Tibial artery (tissue), 4 donors: ENCODE measurements at regions of chr20 and their contacts with region 1.

Region 1: DNA sequence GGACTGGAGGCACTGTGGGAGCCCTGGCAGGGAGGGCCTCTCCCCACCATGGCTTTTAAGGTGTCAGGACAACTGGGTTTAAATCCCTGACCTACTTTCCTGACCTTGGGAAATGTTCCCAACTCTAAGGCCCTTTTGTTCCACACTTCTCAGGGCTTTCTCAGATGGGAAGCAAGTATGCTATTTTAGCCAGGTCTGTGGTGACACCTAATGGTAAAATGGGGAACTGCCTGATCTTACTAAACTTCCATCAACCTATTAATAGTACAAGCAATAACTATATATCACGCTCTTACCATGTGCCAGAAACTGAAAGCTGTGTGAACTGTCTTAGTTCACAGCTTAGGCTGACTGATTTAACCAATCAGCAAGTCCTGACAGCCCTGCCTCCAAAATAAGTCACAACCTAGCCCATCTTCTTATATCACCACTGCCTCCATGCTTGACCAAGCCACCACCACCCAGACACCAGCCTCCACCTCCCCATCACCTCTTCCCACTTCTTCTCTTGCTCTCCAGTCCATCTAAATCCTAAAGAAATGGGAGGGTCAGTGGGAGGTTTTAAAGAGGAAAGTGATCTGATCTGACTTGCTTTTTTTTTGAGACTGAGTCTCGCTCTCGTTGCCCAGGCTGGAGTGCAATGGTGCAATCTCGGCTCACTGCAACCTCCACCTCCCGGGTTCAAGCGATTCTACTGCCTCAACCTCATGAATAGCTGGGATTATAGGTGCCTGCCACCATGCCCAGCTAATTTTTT is 6.9 kb upstream of the BLCAP start:
- DNase-seq: peak in 1 of 2 donors; percentile 38
- H3K4me3 ChIP-seq: no peak overlapping the region
- H3K27ac ChIP-seq: no peak overlapping the region
- H3K4me1 ChIP-seq: no peaks in the 10 kb centered on the region
- H3K27me3 ChIP-seq: peaks cover 0 to 9% of the 10 kb centered on the region in 2 donors
- CTCF ChIP-seq: peak; percentile 82 to 94

Region 2: GRCh38 chr20:37192137-37192854 is 342.3 kb before region 1 on chr20:
- intact Hi-C with region 1: loop called (anchors 5 kb)
- DNase-seq: peak; percentile 90 to 91
- H3K4me3 ChIP-seq: no peak overlapping the region
- H3K27ac ChIP-seq: no peak overlapping the region
- H3K4me1 ChIP-seq: peaks cover 0 to 14% (median 8%) of the 10 kb centered on the region in 4 donors
- H3K27me3 ChIP-seq: no peaks in the 10 kb centered on the region
- CTCF ChIP-seq: peak; percentile 91 to 93

Region 3: GRCh38 chr20:37202267-37202943 is 332.2 kb before region 1 on chr20:
- intact Hi-C with region 1: loop called (anchors 5 kb)
- DNase-seq: peak in 1 of 2 donors; percentile 39
- H3K4me3 ChIP-seq: peak overlapping the region in 1 of 2 donors; percentile 7
- H3K27ac ChIP-seq: peak overlapping the region; percentile 51 to 61
- H3K4me1 ChIP-seq: peaks cover 0 to 9% (median 0%) of the 10 kb centered on the region in 4 donors
- H3K27me3 ChIP-seq: no peaks in the 10 kb centered on the region
- CTCF ChIP-seq: peak; percentile 67 to 77

Region 4: DNA sequence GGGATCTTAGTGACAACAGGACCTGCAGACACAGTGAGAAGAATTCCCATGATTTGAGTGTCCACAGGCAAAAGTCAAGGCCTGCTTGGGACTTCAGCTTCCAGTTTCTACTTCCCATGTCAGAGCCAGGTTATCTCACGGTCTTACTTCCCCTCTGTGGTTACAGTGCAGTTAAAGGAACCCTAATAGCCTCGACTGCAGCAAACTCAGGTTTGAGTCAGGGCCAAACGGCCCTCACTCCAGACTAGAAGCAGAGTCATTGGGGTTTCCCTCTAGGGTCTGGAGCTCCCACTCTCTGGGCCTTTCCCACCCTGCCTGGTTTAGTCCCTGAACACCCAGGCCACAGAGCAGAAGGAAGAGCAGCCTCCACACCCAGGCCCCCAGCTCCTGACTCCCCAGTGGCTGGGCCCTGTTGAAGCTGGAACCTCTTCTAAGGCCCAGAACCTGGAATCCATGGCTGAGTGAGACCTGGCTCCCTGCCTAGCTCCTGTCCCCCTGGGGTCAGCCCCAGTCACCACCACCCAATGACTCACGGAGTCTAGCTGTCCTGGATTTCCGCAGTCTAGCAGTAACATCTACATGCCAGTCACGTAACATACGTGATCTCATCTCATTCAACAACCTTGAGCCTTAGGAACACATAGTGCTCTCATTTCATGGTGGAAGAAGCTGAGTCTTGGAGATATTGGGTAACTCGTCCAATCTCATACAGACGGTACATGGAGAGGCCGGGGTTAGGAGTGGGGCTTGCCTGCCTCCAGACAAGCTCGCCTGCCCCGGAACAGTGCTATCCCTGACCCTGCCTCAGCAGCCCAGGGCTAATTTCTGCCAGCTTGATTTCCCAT is 263.8 kb before region 1 on chr20:
- intact Hi-C with region 1: loop called (anchors 2 kb)
- DNase-seq: no peak
- H3K4me3 ChIP-seq: no peak overlapping the region
- H3K27ac ChIP-seq: no peak overlapping the region
- H3K4me1 ChIP-seq: no peaks in the 10 kb centered on the region
- H3K27me3 ChIP-seq: no peaks in the 10 kb centered on the region
- CTCF ChIP-seq: no peak

Region 5: DNA sequence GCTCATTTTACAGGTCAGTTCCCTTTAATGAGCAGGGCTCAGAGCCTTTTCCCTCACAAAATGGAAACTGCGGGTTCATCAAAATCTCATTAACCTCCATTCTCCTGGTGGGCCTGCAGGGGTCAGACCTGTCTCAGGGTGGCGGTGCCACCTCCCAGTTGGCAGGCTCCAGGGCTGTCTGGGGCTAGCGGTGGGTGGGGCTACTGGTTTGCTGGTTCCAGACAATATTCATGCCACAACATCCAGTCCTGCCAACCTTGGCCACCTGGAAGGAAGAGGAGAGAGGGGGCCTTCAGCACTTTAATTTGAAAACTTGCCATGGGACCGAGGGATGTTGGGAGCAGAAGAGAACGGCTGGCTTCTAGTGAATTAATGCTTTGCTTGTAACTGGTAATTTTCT is 117.4 kb after region 1 on chr20:
- intact Hi-C with region 1: no loop called
- DNase-seq: no peak
- H3K4me3 ChIP-seq: no peak overlapping the region
- H3K27ac ChIP-seq: no peak overlapping the region
- H3K4me1 ChIP-seq: no peaks in the 10 kb centered on the region
- H3K27me3 ChIP-seq: peaks cover 0 to 26% of the 10 kb centered on the region in 2 donors
- CTCF ChIP-seq: peak; percentile 8 to 21